Prostate gland (tissue), 2 donors: ENCODE measurements at regions of chr2 and their contacts with region 1.

Region 1: GRCh38 chr2:10408649-10409579 is 39.2 kb downstream of the ODC1 start:
- DNase-seq: peak; percentile 84
- H3K4me3 ChIP-seq: no peak overlapping the region
- H3K27ac ChIP-seq: peak overlapping the region; percentile 38 to 47
- H3K4me1 ChIP-seq: peaks cover 2% of the 10 kb centered on the region
- H3K27me3 ChIP-seq: no peaks in the 10 kb centered on the region
- CTCF ChIP-seq: peak; percentile 87 to 97 (median 92)
- POLR2A ChIP-seq: no peak

Region 2: DNA sequence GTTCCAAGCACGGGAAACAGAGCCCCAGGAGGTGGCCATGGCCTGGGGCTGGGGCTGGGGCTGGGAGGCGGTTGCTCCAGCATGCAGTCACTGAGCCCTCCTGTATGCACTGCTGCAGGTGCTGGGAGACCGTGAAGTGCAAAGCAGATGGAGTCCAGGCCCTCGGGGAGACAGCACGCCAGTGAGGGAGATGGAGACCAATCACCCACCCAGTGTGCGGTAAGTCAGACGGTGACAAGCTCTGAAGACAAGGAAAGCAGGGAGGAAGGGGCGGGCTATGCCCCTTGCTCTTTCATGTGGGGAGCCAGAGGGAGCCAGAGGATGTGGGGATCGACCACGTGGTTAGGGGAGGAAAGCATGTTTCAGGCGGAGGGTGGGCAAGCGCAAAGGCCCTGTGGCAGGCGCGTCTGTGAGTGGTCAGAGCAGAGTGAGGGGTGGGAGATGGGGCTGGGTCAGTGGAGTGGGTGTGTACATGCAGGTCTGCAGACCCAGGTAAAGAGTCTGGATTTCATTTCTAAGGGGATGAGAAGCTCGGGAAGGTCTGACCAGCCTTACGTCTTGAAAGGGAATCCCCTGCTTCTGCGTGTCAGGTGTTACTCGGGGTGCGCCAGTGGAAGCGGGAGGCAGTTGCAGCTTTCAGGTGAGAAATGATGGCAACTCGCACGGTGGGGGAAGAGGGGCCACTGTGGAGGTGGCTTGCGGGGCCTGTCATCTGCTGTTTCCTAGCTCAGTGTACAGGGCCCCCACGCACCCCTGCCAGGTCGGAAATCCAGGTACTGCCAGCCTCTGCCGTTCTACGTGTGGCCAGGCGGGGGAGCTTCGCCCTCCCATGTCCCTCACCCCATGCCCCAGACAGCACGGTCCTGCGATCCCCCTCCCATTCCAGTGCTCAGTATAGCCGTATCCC is 266.9 kb before region 1 on chr2:
- intact Hi-C with region 1: loop called (anchors 5 kb)
- DNase-seq: peak; percentile 16
- H3K4me3 ChIP-seq: no peak overlapping the region
- H3K27ac ChIP-seq: no peak overlapping the region
- H3K4me1 ChIP-seq: no peaks in the 10 kb centered on the region
- H3K27me3 ChIP-seq: no peaks in the 10 kb centered on the region
- CTCF ChIP-seq: peak; percentile 21 to 57 (median 46)
- POLR2A ChIP-seq: no peak

Region 3: GRCh38 chr2:10302479-10303180 is 106.3 kb before region 1 on chr2 and contains the start of gene HPCAL1:
- intact Hi-C with region 1: loop called (anchors 5 kb)
- DNase-seq: peak; percentile 86
- H3K4me3 ChIP-seq: peak within 1 kb of the TSS; percentile 81 to 85
- H3K27ac ChIP-seq: peak within 1 kb of the TSS; percentile 61 to 68
- H3K4me1 ChIP-seq: peaks cover 3% of the 10 kb centered on the region
- H3K27me3 ChIP-seq: no peaks in the 10 kb centered on the region
- CTCF ChIP-seq: peak; percentile 26 to 76 (median 58)
- POLR2A ChIP-seq: peak; percentile 96
- total RNA-seq, gene HPCAL1: 22.5 to 203 TPM

Region 4: GRCh38 chr2:10344105-10345066 is 64.5 kb before region 1 on chr2:
- intact Hi-C with region 1: loop called (anchors 5 kb)
- DNase-seq: no peak
- H3K4me3 ChIP-seq: no peak overlapping the region
- H3K27ac ChIP-seq: no peak overlapping the region
- H3K4me1 ChIP-seq: no peaks in the 10 kb centered on the region
- H3K27me3 ChIP-seq: no peaks in the 10 kb centered on the region
- CTCF ChIP-seq: no peak
- POLR2A ChIP-seq: no peak